MCF 10A (cell line): ENCODE measurements at regions of chr4 and their contacts with region 1.

Region 1: GRCh38 chr4:48913346-48913745 is 6.8 kb upstream of the OCIAD2 start:
- DNase-seq: peak; percentile 87
- H3K4me3 Mint-ChIP-seq: peak overlapping the region; percentile 38
- H3K27ac Mint-ChIP-seq: peak overlapping the region; percentile 65
- H3K4me1 Mint-ChIP-seq: peaks cover 22% of the 10 kb centered on the region
- H3K27me3 Mint-ChIP-seq: no peaks in the 10 kb centered on the region
- CTCF ChIP-seq: no peak

Region 2: DNA sequence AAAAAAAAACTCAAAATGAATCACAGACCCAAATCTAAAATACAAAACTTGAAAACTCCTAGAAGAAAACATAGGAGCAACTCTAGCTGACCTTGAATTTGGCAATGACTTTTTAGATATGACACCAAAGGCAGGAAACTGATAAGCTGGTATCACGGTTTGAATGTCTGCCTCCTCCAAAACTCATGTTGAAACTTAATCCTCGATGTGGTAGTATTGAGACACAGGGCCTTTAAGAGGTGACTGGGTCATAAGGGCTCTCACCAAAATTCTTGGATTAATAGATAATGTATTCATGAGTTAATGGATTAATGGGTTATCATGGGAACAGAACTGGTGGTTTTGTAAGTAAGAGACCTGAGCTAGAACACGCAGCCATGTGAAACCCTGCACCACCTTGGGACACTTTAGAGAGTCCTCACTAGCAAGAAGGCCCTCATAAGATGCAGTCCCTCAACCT is 173.8 kb before region 1 on chr4:
- CTCF ChIA-PET with region 1: no interaction called
- POLR2A ChIA-PET with region 1: no interaction called
- intact Hi-C with region 1: no loop called
- DNase-seq: no peak
- H3K4me3 Mint-ChIP-seq: no peak overlapping the region
- H3K27ac Mint-ChIP-seq: no peak overlapping the region
- H3K4me1 Mint-ChIP-seq: peaks cover 13% of the 10 kb centered on the region
- H3K27me3 Mint-ChIP-seq: no peaks in the 10 kb centered on the region
- CTCF ChIP-seq: no peak

Region 3: DNA sequence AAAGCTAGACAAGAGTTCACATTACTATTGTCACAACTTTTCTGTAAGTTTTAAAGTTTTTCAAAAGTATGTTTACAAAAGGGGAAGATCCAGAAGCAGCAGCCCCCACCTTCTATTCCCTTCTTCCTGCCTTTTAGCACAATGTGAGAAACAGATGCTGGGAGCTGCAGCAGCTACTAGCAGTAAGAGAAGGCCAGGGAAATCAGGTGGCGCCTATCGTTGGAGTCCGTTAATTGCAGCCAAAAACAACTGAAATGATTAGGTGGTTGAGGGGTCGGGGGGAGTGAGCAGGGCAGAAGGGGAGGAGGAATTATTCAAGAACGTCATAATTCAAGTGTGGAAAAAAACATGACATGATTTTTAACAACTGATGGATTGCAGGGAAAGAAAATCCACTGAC is 160.6 kb before region 1 on chr4:
- CTCF ChIA-PET with region 1: no interaction called
- POLR2A ChIA-PET with region 1: no interaction called
- intact Hi-C with region 1: no loop called
- DNase-seq: no peak
- H3K4me3 Mint-ChIP-seq: no peak overlapping the region
- H3K27ac Mint-ChIP-seq: peak overlapping the region; percentile 44
- H3K4me1 Mint-ChIP-seq: peaks cover 30% of the 10 kb centered on the region
- H3K27me3 Mint-ChIP-seq: no peaks in the 10 kb centered on the region
- CTCF ChIP-seq: no peak

Region 4: DNA sequence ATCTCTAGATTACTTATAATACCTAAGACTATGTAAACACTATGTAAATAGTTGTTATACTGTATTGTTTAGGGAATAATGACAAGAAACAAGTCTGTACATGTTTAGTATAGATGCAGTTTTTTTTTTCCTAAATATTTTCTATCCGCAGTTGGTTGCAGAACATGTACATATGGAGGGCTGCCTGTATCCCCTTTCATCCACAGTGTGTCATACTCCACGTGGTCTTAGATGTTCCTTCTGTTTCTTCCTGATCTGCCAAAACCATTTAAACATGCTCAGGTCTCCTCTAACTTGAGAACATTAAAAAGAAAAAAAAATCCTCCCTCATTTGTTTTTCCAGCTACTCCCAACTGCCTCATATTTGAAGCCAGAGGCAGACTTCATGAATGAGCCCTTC is 68.5 kb before region 1 on chr4:
- CTCF ChIA-PET with region 1: no interaction called
- POLR2A ChIA-PET with region 1: no interaction called
- intact Hi-C with region 1: no loop called
- DNase-seq: no peak
- H3K4me3 Mint-ChIP-seq: no peak overlapping the region
- H3K27ac Mint-ChIP-seq: peak overlapping the region; percentile 64
- H3K4me1 Mint-ChIP-seq: peaks cover 10% of the 10 kb centered on the region
- H3K27me3 Mint-ChIP-seq: no peaks in the 10 kb centered on the region
- CTCF ChIP-seq: no peak

Region 5: DNA sequence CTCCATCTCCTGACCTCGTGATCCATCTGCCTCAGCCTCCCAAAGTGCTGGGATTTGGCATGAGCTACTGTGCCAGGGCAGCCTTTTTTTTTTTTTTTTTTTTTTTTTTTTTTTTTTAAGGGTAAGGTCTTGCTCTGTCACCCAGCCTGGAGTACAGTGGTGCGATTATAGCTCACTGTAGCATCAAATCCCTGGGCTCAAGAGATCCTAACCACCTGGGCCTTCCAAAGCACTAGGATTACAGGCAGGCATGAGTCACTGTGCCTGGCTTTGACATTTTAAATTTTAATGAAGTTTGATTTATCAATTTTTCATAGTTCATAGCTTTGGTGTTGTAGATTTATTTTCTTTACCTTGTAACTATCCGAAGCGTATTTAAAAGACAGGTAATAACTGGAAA is 11.1 kb after region 1 on chr4:
- CTCF ChIA-PET with region 1: interaction called, 13 read pairs
- POLR2A ChIA-PET with region 1: interaction called, 3 read pairs
- intact Hi-C with region 1: no loop called
- DNase-seq: no peak
- H3K4me3 Mint-ChIP-seq: no peak overlapping the region
- H3K27ac Mint-ChIP-seq: no peak overlapping the region
- H3K4me1 Mint-ChIP-seq: no peaks in the 10 kb centered on the region
- H3K27me3 Mint-ChIP-seq: no peaks in the 10 kb centered on the region
- CTCF ChIP-seq: no peak